ENCODE measurements at regions of chr2 and their contacts with region 1.

Region 1: GRCh38 chr2:50066873-50067272 is 912.6 kb upstream of the FSHR start:
- DNase-seq: no peak

Region 2: DNA sequence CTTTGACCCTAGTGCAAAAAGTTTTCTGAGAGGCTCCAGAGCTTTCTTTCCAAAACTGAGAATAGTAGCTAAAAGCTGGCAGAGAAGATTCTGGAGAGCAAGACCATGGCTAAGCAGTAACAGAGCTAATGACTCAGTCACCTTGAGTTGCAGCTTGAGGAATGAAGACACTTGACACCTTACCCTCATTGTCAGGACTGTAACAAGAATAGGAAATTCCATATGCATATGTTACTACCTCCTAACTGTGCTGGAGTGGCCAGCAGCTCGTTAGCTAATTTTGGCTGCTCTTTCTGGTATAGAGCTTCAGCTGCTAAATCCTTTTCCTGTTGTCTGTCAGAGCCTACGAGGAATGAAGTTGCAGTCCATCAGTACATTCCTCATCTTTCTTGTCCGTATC is 1242.8 kb before region 1 on chr2:
- intact Hi-C with region 1: loop called in 1 of 2 experiments (anchors 5 kb)
- DNase-seq: no peak

Region 3: GRCh38 chr2:50529600-50530218 is 462.8 kb after region 1 on chr2:
- intact Hi-C with region 1: no loop called
- DNase-seq: no peak

Measured in posterior vena cava (tissue), 2 donors.